H1 (cell line): ENCODE measurements at regions of chr3 and their contacts with region 1.

Region 1: GRCh38 chr3:55721716-55722484 is 234.8 kb upstream of the WNT5A start:
- DNase-seq: peak in 1 of 2 experiments; percentile 63
- H3K4me3 ChIP-seq: no peak overlapping the region
- H3K27ac ChIP-seq: no peak overlapping the region
- H3K4me1 ChIP-seq: peaks cover 0 to 7% (median 0%) of the 10 kb centered on the region in 4 experiments; a peak in 4 of 7 replicates
- H3K27me3 ChIP-seq: no peaks in the 10 kb centered on the region
- CTCF ChIP-seq: peak; percentile 72 to 75 (median 72)
- EP300 ChIP-seq: no peak
- POLR2A ChIP-seq: no peak
- RAD21 ChIP-seq: peak; percentile 89 to 91

Region 2: GRCh38 chr3:55160241-55160983 is 561.5 kb before region 1 on chr3:
- CTCF ChIA-PET with region 1: no interaction called
- POLR2A ChIA-PET with region 1: no interaction called
- DNase-seq: no peak
- H3K4me3 ChIP-seq: no peak overlapping the region
- H3K27ac ChIP-seq: no peak overlapping the region
- H3K4me1 ChIP-seq: no peaks in the 10 kb centered on the region
- H3K27me3 ChIP-seq: no peaks in the 10 kb centered on the region
- CTCF ChIP-seq: no peak
- EP300 ChIP-seq: no peak
- POLR2A ChIP-seq: no peak
- RAD21 ChIP-seq: no peak

Region 3: GRCh38 chr3:55485211-55485791 is 236.6 kb before region 1 on chr3:
- CTCF ChIA-PET with region 1: interaction called, 18 read pairs
- POLR2A ChIA-PET with region 1: interaction called, 3 read pairs
- DNase-seq: peak in 1 of 2 experiments; percentile 89
- H3K4me3 ChIP-seq: peak overlapping the region; percentile 42 to 90 (median 70)
- H3K27ac ChIP-seq: no peak overlapping the region
- H3K4me1 ChIP-seq: peaks cover 3 to 34% (median 19%) of the 10 kb centered on the region in 4 experiments
- H3K27me3 ChIP-seq: peaks cover 29 to 86% (median 74%) of the 10 kb centered on the region in 4 experiments
- CTCF ChIP-seq: peak in 2 of 3 experiments; percentile 65 to 74; a peak in 3 of 4 replicates
- EP300 ChIP-seq: no peak
- POLR2A ChIP-seq: no peak
- RAD21 ChIP-seq: peak; percentile 82 to 83

Region 4: DNA sequence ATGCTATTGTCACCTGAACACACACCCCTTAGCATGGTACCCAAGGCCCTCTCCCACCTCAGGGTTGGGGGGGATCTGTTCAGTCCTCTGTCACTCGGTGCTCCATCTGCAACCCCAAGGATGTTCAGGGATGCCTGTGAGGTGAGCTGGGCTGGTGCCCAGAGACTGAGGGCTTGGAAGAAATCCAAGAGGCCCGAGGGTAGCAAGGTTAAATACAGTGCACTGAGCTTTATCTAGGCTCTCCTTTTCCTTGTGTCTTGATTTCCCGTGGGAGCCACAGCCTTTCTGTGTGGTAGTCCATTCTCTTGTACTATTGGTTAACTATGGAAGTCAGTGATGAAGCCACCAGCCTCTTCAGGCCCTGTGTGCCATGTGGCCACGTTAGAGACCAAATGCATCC is 216.1 kb before region 1 on chr3:
- CTCF ChIA-PET with region 1: interaction called, 23 read pairs
- POLR2A ChIA-PET with region 1: no interaction called
- DNase-seq: no peak
- H3K4me3 ChIP-seq: no peak overlapping the region
- H3K27ac ChIP-seq: no peak overlapping the region
- H3K4me1 ChIP-seq: no peaks in the 10 kb centered on the region
- H3K27me3 ChIP-seq: no peaks in the 10 kb centered on the region
- CTCF ChIP-seq: no peak
- EP300 ChIP-seq: no peak
- POLR2A ChIP-seq: no peak
- RAD21 ChIP-seq: no peak

Region 5: DNA sequence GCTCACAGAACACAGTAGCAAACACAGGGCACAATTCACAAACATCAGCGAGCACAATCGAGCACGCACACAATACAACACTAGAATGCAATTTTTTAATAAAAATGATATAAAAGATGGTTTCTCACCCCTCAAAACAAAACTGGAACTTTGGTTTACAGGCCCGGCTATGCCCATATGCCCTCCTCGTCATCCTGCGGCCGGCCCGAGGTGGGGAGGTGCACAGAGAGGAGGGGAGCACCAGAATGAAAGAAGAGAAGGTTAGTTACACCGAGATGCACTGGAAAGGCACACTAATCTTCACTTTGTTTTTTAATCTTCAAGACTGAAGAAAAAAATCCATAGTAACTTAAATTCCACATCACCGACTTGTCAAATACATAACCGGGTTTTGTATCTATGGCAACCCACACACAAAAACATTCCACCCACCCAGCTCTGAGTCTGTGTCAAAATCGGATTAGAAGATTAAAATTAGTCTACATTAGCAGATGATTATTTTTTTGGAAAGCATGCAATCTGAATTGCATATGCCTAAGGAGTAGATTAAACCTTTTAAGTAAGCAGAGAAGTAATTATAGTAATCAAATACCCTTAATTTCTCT is 38.1 kb before region 1 on chr3:
- CTCF ChIA-PET with region 1: no interaction called
- POLR2A ChIA-PET with region 1: no interaction called
- DNase-seq: no peak
- H3K4me3 ChIP-seq: no peak overlapping the region
- H3K27ac ChIP-seq: no peak overlapping the region
- H3K4me1 ChIP-seq: peaks cover 0 to 2% (median 0%) of the 10 kb centered on the region in 4 experiments; a peak in 1 of 7 replicates
- H3K27me3 ChIP-seq: no peaks in the 10 kb centered on the region
- CTCF ChIP-seq: no peak
- EP300 ChIP-seq: no peak
- POLR2A ChIP-seq: no peak
- RAD21 ChIP-seq: no peak

Region 6: DNA sequence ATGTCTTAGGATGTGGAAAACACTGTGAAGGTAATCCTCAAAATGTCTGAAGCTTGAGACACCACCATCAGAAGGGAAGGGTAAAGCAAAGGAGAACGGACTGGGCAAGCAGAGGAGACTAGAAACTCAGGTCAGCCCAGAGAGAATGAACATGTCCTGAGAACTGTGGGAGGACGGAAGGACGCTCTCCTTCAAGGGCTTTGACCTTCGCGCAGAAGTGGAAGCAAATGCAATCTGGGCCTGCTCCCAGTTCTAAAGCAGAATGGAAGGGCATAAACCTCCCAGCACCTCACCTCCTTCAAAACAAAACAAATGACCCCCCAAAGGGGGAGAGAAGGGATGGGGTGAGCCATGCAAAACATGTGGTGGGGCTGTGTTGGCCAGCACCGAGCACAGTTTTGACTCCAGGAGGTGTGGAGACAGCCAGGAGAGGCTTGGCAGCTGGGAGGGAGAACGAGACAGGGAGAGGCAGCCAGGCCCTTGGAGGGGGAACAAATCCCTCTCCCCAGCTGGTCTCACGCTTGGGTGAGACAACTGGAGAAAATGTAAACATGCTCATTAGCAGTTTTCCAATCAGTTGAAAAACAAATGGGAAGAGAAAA is 12.4 kb before region 1 on chr3:
- CTCF ChIA-PET with region 1: interaction called, 18 read pairs
- POLR2A ChIA-PET with region 1: interaction called, 3 read pairs
- DNase-seq: no peak
- H3K4me3 ChIP-seq: no peak overlapping the region
- H3K27ac ChIP-seq: no peak overlapping the region
- H3K4me1 ChIP-seq: no peaks in the 10 kb centered on the region
- H3K27me3 ChIP-seq: no peaks in the 10 kb centered on the region
- CTCF ChIP-seq: no peak
- EP300 ChIP-seq: no peak
- POLR2A ChIP-seq: no peak
- RAD21 ChIP-seq: no peak

Region 7: DNA sequence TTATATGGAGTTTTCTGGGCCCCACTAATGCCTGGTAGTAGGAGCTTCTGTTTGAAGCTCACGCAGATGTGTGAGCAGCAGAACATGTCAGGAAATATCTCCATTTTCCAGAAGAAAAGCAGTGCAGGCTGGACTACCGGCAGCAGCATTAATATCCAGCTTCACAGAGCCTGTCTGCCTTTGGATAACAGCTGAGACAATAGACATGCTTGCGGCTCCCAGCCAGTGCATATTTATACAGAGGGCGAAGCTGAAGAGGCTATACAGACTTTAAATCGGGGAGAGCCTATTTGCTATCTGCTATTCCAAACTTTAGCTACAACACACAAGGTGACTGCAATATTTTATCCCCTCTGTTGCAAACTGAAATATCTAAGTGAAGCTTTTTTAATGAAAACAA is 15.3 kb after region 1 on chr3:
- CTCF ChIA-PET with region 1: interaction called, 11 read pairs
- POLR2A ChIA-PET with region 1: no interaction called
- DNase-seq: no peak
- H3K4me3 ChIP-seq: no peak overlapping the region
- H3K27ac ChIP-seq: no peak overlapping the region
- H3K4me1 ChIP-seq: no peaks in the 10 kb centered on the region
- H3K27me3 ChIP-seq: peaks cover 0 to 1% (median 0%) of the 10 kb centered on the region in 4 experiments; a peak in 1 of 7 replicates
- CTCF ChIP-seq: no peak
- EP300 ChIP-seq: no peak
- POLR2A ChIP-seq: no peak
- RAD21 ChIP-seq: no peak

Region 8: DNA sequence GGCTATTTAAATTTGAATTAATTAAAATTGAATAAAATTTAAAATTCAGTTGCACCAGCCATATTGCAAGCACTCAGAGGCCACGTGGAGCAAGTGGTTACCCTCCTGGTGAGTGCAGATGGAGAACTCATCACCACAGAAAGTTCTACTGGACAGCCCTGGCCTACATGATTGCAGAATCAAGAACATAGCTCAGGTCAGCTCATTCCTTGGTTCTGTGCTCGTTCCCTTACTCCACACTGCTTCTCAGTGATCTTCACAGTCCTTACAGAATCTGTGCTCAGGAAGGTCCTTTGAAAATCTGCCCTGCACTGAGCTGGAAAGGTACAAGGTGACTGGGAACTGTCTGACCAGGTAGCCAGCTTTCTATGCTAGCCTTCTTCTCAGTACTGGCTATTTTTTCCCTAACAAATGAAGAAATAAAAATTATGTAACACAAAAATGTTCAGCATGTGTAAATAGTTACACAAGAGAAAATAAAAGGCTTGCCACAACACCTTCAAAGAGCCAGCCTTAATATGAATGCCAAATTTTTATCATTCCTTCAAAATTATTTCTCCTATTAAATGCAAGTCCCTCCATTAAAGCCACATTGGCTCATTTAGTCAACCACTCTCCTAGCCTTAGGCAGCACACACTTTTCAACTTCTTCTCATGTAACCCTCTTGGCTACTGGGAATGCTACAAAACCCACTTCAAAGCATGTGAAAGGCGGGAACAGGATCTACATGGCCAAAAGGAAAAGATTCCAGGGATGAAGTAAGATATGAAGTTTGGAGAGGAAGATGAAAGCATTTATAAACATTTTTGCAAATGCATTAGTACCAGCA is 91.6 kb after region 1 on chr3:
- CTCF ChIA-PET with region 1: no interaction called
- POLR2A ChIA-PET with region 1: no interaction called
- DNase-seq: no peak
- H3K4me3 ChIP-seq: no peak overlapping the region
- H3K27ac ChIP-seq: no peak overlapping the region
- H3K4me1 ChIP-seq: no peaks in the 10 kb centered on the region
- H3K27me3 ChIP-seq: no peaks in the 10 kb centered on the region
- CTCF ChIP-seq: no peak
- EP300 ChIP-seq: no peak
- POLR2A ChIP-seq: no peak
- RAD21 ChIP-seq: no peak

Region 9: DNA sequence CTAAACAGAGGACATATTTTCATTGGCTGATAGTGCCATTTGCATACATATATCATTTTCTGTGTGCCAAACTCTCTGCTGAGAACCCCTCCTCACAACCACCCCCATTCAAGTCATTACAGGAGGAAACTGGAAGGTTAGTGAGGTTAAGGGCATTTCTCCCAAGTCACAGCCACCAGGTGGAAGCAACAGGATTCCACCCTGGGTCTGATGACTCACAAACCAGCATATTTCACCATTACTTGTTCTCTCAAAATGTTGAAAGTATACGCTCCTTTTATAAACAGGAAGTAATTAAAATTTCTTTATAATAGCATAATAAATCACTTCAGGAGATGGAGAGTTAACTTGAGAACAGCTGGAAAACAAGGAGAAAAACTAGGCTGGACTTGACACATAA is 163.8 kb after region 1 on chr3:
- CTCF ChIA-PET with region 1: no interaction called
- POLR2A ChIA-PET with region 1: no interaction called
- DNase-seq: no peak
- H3K4me3 ChIP-seq: no peak overlapping the region
- H3K27ac ChIP-seq: no peak overlapping the region
- H3K4me1 ChIP-seq: peaks cover 0 to 18% (median 11%) of the 10 kb centered on the region in 4 experiments; a peak in 4 of 7 replicates
- H3K27me3 ChIP-seq: no peaks in the 10 kb centered on the region
- CTCF ChIP-seq: no peak; a peak in 1 of 4 replicates
- EP300 ChIP-seq: no peak
- POLR2A ChIP-seq: no peak
- RAD21 ChIP-seq: peak in 1 of 2 experiments; percentile 29; a peak in 1 of 4 replicates